ENCODE measurements at regions of chr19 and their contacts with region 1.

Region 1: DNA sequence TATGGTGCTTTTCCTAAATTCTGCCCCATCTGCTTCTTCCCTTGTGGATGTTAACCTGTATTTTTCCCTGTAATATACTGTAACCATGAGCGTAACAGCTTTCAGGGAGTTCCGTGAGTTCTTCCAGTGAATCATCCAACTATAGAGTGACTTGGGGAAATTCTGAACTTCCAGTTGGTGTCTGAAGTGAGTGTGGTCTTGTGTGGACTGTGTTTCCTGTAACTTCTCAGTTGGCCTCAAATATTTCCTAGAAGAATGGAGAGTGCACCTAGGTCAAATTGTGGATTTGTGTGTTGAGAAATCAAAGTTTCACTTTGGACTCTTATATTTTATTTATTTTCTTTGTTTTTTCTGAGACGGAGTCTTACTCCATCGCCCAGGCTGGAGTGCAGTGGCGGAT is 11.0 kb upstream of the ZNF766 start:
- DNase-seq: no peak
- H3K4me3 ChIP-seq: no peak overlapping the region
- H3K27ac ChIP-seq: no peak overlapping the region
- H3K4me1 ChIP-seq: no peaks in the 10 kb centered on the region
- CTCF ChIP-seq: no peak

Region 2: DNA sequence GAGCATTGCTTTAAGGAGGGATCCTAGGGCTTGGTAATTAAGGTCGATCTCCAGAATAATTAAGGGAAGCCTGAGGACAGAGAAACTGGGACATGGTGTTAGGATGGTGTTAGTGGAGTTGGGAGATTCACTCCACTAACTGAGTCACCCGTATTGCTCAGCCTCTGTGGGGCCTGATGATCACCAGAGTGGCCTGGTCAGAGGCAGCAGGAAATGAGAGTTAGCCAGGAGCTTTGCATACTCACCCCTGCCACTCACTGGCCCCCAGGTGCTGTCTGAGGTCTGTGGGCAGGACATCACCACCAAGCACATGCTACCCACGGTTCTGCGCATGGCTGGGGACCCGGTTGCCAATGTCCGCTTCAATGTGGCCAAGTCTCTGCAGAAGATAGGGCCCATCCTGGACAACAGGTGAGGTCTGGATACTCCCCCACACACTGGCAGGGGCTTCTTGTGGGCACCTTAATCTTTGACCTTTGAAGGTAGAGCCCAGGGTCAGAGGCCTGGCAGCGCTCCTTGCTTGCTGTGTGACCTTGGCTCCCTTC is 36.5 kb before region 1 on chr19:
- CTCF ChIA-PET with region 1: no interaction called
- POLR2A ChIA-PET with region 1: no interaction called
- intact Hi-C with region 1: no loop called
- DNase-seq: no peak
- H3K4me3 ChIP-seq: no peak overlapping the region
- H3K27ac ChIP-seq: no peak overlapping the region
- H3K4me1 ChIP-seq: no peaks in the 10 kb centered on the region
- CTCF ChIP-seq: no peak

Region 3: GRCh38 chr19:52269338-52270261 is 11.2 kb after region 1 on chr19 and contains the start of gene ZNF766:
- CTCF ChIA-PET with region 1: no interaction called
- POLR2A ChIA-PET with region 1: interaction called, 14 read pairs
- intact Hi-C with region 1: no loop called
- DNase-seq: peak; percentile 95
- H3K4me3 ChIP-seq: peak within 1 kb of the TSS; percentile 91
- H3K27ac ChIP-seq: peak within 1 kb of the TSS; percentile 64
- H3K4me1 ChIP-seq: peaks cover 16% of the 10 kb centered on the region
- CTCF ChIP-seq: no peak
- total RNA-seq, gene ZNF766: 15.5 and 17.1 TPM in 2 replicates